ENCODE measurements at regions of chr7 and their contacts with region 1.

Region 1: GRCh38 chr7:101900103-101900502 is 82.7 kb downstream of the CUX1 start:
- DNase-seq: no peak
- ATAC-seq: no peak
- H3K4me3 ChIP-seq: no peak overlapping the region
- H3K27ac ChIP-seq: no peak overlapping the region
- H3K4me1 ChIP-seq: peaks cover 37 to 43% of the 10 kb centered on the region in 2 experiments
- H3K27me3 ChIP-seq: no peaks in the 10 kb centered on the region
- CTCF ChIP-seq: no peak
- EP300 ChIP-seq: no peak
- POLR2A ChIP-seq: no peak
- RAD21 ChIP-seq: no peak

Region 2: GRCh38 chr7:101862280-101863220 is 37.6 kb before region 1 on chr7:
- CTCF ChIA-PET with region 1: no interaction called
- POLR2A ChIA-PET with region 1: no interaction called
- in situ Hi-C with region 1: no loop called
- intact Hi-C with region 1: loop called (anchors 1 kb)
- DNase-seq: peak; percentile 68 to 93 (median 74)
- ATAC-seq: peak; percentile 97
- H3K4me3 ChIP-seq: peak overlapping the region; percentile 2; the same call in 1 of the 2 replicates
- H3K27ac ChIP-seq: peak overlapping the region; percentile 84
- H3K4me1 ChIP-seq: peaks cover 26 to 48% of the 10 kb centered on the region in 2 experiments
- H3K27me3 ChIP-seq: no peaks in the 10 kb centered on the region
- CTCF ChIP-seq: no peak
- EP300 ChIP-seq: no peak
- POLR2A ChIP-seq: peak; percentile 38; the same call in 1 of the 2 replicates
- RAD21 ChIP-seq: peak in 1 of 2 experiments; percentile 16; a peak in 2 of 4 replicates

Region 3: GRCh38 chr7:101882595-101883564 is 17.2 kb before region 1 on chr7:
- CTCF ChIA-PET with region 1: interaction called, 3 read pairs
- POLR2A ChIA-PET with region 1: interaction called, 17 read pairs
- in situ Hi-C with region 1: no loop called
- intact Hi-C with region 1: loop called (anchors 1 kb)
- DNase-seq: peak; percentile 75 to 96 (median 84)
- ATAC-seq: peak; percentile 98
- H3K4me3 ChIP-seq: no peak overlapping the region
- H3K27ac ChIP-seq: peak overlapping the region; percentile 79
- H3K4me1 ChIP-seq: peaks cover 32 to 34% of the 10 kb centered on the region in 2 experiments
- H3K27me3 ChIP-seq: no peaks in the 10 kb centered on the region
- CTCF ChIP-seq: peak in 2 of 3 experiments; percentile 19 to 34; a peak in 1 of 6 replicates
- EP300 ChIP-seq: peak; percentile 80
- POLR2A ChIP-seq: 0 out of 2 replicates have a peak, but pooled peaks have one; percentile 44
- RAD21 ChIP-seq: peak; percentile 11 to 47; a peak in 3 of 4 replicates

Region 4: GRCh38 chr7:102079140-102080018 is 179.3 kb after region 1 on chr7:
- CTCF ChIA-PET with region 1: no interaction called
- POLR2A ChIA-PET with region 1: no interaction called
- in situ Hi-C with region 1: no loop called
- intact Hi-C with region 1: loop called (anchors 5 kb)
- DNase-seq: peak in 2 of 4 experiments; percentile 25 to 45
- ATAC-seq: peak; percentile 18
- H3K4me3 ChIP-seq: no peak overlapping the region
- H3K27ac ChIP-seq: peak overlapping the region; percentile 96
- H3K4me1 ChIP-seq: peaks cover 29 to 35% of the 10 kb centered on the region in 2 experiments; a peak in 4 of 5 replicates
- H3K27me3 ChIP-seq: no peaks in the 10 kb centered on the region
- CTCF ChIP-seq: no peak
- EP300 ChIP-seq: no peak
- POLR2A ChIP-seq: no peak
- RAD21 ChIP-seq: no peak

Measured in K562 (cell line).